HEK293 (cell line): ENCODE measurements at regions of chr19 and their contacts with region 1.

Region 1: DNA sequence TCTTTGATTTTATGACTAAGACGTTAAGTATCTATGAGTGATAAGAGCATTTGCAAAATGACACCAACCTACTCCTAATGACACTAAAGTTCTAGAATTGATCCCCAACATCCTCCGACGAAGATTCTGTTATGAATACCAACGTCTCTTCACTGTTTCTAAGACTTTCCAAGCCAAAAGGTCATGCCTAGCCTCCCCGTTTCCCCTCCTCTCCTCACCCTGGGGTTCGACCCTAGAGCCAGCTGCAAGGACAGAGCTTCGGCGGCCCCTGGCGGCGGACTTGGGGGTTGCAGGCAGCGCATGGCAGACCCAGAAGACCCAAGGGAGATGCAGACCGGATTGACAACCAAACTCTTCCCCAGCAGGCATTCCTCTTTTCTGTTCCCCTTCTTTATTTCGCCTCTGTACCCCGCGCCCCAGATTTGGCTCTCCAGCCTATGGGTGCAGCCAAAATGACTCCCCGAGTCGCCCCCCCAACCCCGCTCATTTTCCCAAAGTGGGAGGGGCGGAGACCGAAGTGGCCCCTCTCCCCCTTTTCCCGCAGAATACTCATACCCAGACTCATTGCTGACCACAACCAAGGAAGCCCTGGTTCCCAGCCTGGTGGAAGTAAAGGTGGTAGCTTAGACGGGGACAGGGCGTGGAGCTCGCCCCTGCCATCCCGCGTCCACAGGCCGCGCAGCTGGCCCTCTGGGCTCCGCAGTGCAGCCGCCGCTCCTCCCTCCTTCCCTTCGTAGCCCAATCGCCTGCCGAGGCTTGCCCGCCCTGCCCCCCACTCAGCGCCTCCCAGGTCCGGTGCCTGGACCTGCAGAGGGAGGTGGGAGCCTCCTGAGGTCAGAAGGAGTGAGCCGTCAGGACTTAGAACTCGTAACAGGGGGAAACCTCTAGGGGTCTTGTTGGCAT is 4.1 kb upstream of the EML2 start:
- H3K4me3 ChIP-seq: no peak overlapping the region
- H3K27ac ChIP-seq: no peak overlapping the region
- H3K4me1 ChIP-seq: peaks cover 12% of the 10 kb centered on the region
- CTCF ChIP-seq: peak; percentile 95

Region 2: DNA sequence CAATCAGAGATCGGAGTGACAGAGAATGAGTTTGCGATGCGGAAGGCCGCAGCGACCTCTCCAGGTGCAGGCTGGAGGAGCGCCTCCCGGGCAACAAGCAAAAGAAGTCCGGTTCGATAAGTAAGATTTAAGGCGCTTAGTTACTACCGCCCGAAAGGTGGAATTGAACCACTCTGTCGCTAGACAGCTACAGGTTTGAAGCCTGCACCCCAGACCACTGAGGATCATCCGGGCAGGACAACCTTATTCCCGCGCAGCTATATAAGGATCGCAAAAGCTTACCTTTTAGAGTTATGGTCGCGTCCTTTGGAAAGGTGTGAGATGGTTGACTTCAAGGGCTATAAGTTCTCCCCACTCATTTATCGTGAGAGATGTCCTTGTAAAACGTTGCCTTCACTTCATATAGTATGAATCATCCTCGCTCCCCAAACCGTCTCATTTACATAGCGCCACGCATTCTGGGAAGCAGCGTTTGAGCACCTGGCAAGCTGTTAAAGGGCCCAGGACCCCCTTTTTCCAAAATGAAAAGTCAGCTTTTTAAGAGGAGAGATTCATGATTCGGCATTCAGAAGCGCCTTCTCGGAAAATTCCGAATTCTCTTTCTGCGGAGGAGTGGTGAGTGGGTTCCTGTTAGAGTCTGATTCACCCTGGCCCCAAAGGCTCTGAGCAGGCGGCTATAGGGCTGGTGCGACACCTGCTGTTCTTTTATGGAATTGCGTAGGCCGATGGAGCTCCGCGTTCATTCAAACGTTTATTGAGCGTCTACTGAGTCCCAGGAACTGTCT is 164.6 kb before region 1 on chr19:
- CTCF ChIA-PET with region 1: interaction called, 41 read pairs
- POLR2A ChIA-PET with region 1: interaction called, 4 read pairs
- H3K4me3 ChIP-seq: peak overlapping the region; percentile 52
- H3K27ac ChIP-seq: peak overlapping the region; percentile 98
- H3K4me1 ChIP-seq: no peaks in the 10 kb centered on the region
- CTCF ChIP-seq: peak; percentile 95

Region 3: GRCh38 chr19:45523642-45524256 is 119.5 kb before region 1 on chr19:
- CTCF ChIA-PET with region 1: interaction called, 40 read pairs
- POLR2A ChIA-PET with region 1: interaction called, 3 read pairs
- H3K4me3 ChIP-seq: no peak overlapping the region
- H3K27ac ChIP-seq: no peak overlapping the region
- H3K4me1 ChIP-seq: no peaks in the 10 kb centered on the region
- CTCF ChIP-seq: peak; percentile 89

Region 4: DNA sequence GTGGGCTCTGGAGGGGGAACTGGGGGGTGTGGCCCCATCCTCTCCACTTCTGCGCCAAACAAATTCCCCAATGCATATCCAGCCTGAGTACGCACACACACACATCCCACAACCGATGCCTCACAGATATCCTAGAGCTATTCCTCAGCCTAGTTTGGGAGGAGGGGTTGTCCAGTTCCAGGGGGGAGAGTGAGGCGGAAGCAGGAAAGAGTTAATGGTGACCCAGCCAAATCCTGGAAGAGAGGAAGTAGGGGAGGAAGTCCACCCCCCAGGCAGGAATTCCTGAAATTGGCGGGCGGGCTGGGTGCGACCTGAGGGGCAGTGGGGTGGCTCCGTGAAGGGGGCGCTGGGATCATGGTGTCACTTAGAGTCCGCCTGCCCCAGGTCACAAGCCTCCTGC is 42.2 kb before region 1 on chr19:
- CTCF ChIA-PET with region 1: interaction called, 155 read pairs
- POLR2A ChIA-PET with region 1: interaction called, 6 read pairs
- H3K4me3 ChIP-seq: no peak overlapping the region
- H3K27ac ChIP-seq: no peak overlapping the region
- H3K4me1 ChIP-seq: no peaks in the 10 kb centered on the region
- CTCF ChIP-seq: no peak

Region 5: GRCh38 chr19:45653634-45654033 is 10.4 kb after region 1 on chr19:
- CTCF ChIA-PET with region 1: interaction called, 17 read pairs
- POLR2A ChIA-PET with region 1: interaction called, 4 read pairs
- H3K4me3 ChIP-seq: no peak overlapping the region
- H3K27ac ChIP-seq: no peak overlapping the region
- H3K4me1 ChIP-seq: no peaks in the 10 kb centered on the region
- CTCF ChIP-seq: no peak

Region 6: GRCh38 chr19:45770192-45771101 is 127.2 kb after region 1 on chr19:
- CTCF ChIA-PET with region 1: no interaction called
- POLR2A ChIA-PET with region 1: interaction called, 14 read pairs
- H3K4me3 ChIP-seq: peak overlapping the region; percentile 36
- H3K27ac ChIP-seq: peak overlapping the region; percentile 70
- H3K4me1 ChIP-seq: peaks cover 15% of the 10 kb centered on the region
- CTCF ChIP-seq: peak; percentile 97